Activated T-helper 2 cell treated with anti-CD3 and anti-CD28 coated beads, Interferon-gamma antibody, Interleukin-2, Interleukin-4, amounts not matched to agents 10 μg/mL and 5 μg/mL and 100 μg/mL, durations not matched to agents 14 hours and 24 hours and 36 hours (primary cell): ENCODE measurements at regions of chr16 and their contacts with region 1.

Region 1: DNA sequence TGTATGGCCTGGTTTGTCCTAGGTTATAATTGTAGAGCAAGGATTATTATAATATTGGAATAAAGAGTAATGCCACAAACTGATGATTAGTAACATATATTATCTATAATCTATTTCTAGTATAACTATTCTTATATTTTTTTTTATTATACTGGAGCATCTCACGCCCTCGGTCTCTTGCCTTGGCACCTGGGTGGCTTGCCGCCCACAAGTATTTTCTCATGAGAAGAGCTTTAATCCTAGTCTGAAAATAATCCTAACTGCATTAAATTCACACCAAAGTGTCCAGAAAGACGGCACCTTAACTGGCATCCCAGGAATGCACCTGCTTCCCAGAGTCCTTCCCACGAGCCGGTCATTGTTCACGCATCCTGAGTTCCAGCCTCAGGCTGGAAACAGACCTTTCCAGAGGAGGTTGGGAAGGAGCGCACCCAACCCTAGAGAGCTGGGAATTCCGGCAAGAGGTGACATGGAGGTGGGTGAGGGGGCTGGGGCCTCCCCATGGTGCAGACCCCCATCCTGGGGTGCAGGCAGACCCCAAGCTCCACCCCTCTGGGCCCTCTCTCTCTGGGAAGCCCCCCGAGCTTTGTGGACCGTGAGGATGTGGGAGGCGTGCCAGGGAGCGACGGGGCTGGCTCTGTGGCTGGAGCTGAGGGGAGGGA is 15.9 kb downstream of the CHMP1A start:
- DNase-seq: no peak
- H3K4me3 Mint-ChIP-seq: no peak overlapping the region
- H3K27ac Mint-ChIP-seq: no peak overlapping the region
- H3K4me1 Mint-ChIP-seq: peaks cover 7% of the 10 kb centered on the region
- H3K27me3 Mint-ChIP-seq: no peaks in the 10 kb centered on the region

Region 2: DNA sequence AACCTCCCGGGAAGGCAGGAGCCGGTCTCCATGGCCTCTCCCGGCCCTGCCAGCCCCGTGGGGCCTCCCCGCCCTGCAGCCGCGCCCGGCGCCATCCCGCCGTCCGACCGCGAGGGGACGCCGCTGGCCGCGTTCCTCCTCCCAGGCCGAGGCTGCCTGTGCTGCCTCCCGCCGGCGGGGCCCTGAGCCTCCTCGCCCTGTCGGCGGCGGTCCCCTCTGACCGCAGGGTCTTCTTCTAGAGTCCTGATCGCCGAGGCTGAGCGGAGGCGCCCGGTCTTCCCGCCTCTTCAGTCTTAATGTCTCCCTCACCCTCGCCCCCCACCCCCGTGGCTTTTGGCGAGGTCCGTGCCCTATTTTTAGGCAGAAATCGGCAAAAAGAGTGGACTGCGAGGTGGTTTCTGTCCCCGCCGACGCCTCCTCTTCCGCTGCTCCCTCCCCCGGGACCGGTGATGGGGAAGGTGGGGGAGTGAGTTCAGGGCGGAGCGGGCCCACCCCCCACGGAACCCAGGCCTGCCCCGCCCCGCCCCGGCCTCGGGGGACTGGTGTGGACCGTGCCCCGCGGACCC is 66.8 kb before region 1 on chr16:
- intact Hi-C with region 1: loop called (anchors 2 kb)
- DNase-seq: peak; percentile 46
- H3K4me3 Mint-ChIP-seq: peak overlapping the region; percentile 49
- H3K27ac Mint-ChIP-seq: no peak overlapping the region
- H3K4me1 Mint-ChIP-seq: peaks cover 2% of the 10 kb centered on the region
- H3K27me3 Mint-ChIP-seq: peaks cover 15% of the 10 kb centered on the region

Region 3: GRCh38 chr16:89602273-89602951 is 39.2 kb before region 1 on chr16:
- intact Hi-C with region 1: loop called (anchors 1 kb)
- DNase-seq: no peak
- H3K4me3 Mint-ChIP-seq: no peak overlapping the region
- H3K27ac Mint-ChIP-seq: no peak overlapping the region
- H3K4me1 Mint-ChIP-seq: peaks cover 8% of the 10 kb centered on the region
- H3K27me3 Mint-ChIP-seq: no peaks in the 10 kb centered on the region